ENCODE measurements at regions of chr2 and their contacts with region 1.

Region 1: GRCh38 chr2:193187816-193188215 is 993.1 kb upstream of the TMEFF2 start:
- DNase-seq: no peak
- ATAC-seq: peak; percentile 46
- H3K4me3 ChIP-seq: peak overlapping the region; percentile 66
- H3K27ac ChIP-seq: no peak overlapping the region
- H3K4me1 ChIP-seq: no peaks in the 10 kb centered on the region
- H3K27me3 ChIP-seq: no peaks in the 10 kb centered on the region
- CTCF ChIP-seq: no peak

Region 2: GRCh38 chr2:193124815-193125214 is 63.0 kb before region 1 on chr2:
- CTCF ChIA-PET with region 1: no interaction called
- POLR2A ChIA-PET with region 1: no interaction called
- intact Hi-C with region 1: loop called (anchors 5 kb)
- DNase-seq: no peak
- ATAC-seq: no peak
- H3K4me3 ChIP-seq: no peak overlapping the region
- H3K27ac ChIP-seq: no peak overlapping the region
- H3K4me1 ChIP-seq: no peaks in the 10 kb centered on the region
- H3K27me3 ChIP-seq: no peaks in the 10 kb centered on the region
- CTCF ChIP-seq: no peak

Measured in PC-3 (cell line).